Breast epithelium (tissue), 4 donors: ENCODE measurements at regions of chr1 and their contacts with region 1.

Region 1: GRCh38 chr1:43974443-43975248 is at the start of gene ATP6V0B:
- DNase-seq: peak; percentile 95 to 98
- H3K4me3 ChIP-seq: peak within 1 kb of the TSS; percentile 92 to 95 (median 95)
- H3K27ac ChIP-seq: peak within 1 kb of the TSS; percentile 96 to 97
- H3K4me1 ChIP-seq: peaks cover 0 to 26% of the 10 kb centered on the region in 2 donors
- H3K27me3 ChIP-seq: no peaks in the 10 kb centered on the region
- CTCF ChIP-seq: peak; percentile 8 to 58 (median 54)
- POLR2A ChIP-seq: peak; percentile 88
- total RNA-seq, gene ATP6V0B: 131 to 156 (median 155) TPM

Region 2: GRCh38 chr1:42335050-42335808 is 1639.4 kb before region 1 on chr1 and contains the start of gene FOXJ3:
- intact Hi-C with region 1: loop called (anchors 5 kb)
- DNase-seq: peak; percentile 83 to 89
- H3K4me3 ChIP-seq: peak within 1 kb of the TSS; percentile 96 to 98 (median 97)
- H3K27ac ChIP-seq: peak within 1 kb of the TSS; percentile 97 to 99
- H3K4me1 ChIP-seq: no peaks in the 10 kb centered on the region
- H3K27me3 ChIP-seq: no peaks in the 10 kb centered on the region
- CTCF ChIP-seq: peak in 1 of 3 donors; percentile 19
- POLR2A ChIP-seq: peak; percentile 57
- total RNA-seq, gene FOXJ3: 52.6 to 82.7 (median 57.7) TPM

Region 3: DNA sequence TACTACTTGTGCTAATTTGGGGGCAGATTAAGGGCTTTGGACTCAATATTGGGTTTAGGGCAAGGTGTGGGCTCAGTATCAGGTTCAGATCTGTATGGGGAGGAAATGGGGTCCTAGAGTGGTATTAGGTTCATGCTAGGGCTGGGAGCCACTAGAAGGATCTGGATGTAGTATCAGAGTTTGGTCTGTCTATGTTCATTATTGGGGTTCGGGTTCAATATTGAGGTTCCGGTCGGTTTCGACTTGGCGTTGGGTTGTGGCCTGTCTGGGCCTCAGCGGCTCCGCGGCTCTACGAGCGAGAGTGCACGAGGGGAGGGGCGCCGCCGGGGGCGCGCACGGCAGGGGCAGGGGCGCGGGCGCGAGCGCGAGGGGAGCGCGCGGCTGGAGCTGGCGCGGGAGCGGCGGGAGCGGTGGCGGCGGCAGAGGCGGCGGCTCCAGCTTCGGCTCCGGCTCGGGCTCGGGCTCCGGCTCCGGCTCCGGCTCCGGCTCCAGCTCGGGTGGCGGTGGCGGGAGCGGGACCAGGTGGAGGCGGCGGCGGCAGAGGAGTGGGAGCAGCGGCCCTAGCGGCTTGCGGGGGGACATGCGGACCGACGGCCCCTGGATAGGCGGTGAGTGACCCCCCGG is 444.1 kb before region 1 on chr1 and contains the start of gene PTPRF:
- intact Hi-C with region 1: loop called (anchors 10 kb)
- DNase-seq: peak in 1 of 2 donors; percentile 73
- H3K4me3 ChIP-seq: peak within 1 kb of the TSS; percentile 59 to 97 (median 88)
- H3K27ac ChIP-seq: peak within 1 kb of the TSS; percentile 85 to 98
- H3K4me1 ChIP-seq: peaks cover 0 to 13% of the 10 kb centered on the region in 2 donors
- H3K27me3 ChIP-seq: no peaks in the 10 kb centered on the region
- CTCF ChIP-seq: no peak
- POLR2A ChIP-seq: no peak
- total RNA-seq, gene PTPRF: 109 to 149 (median 116) TPM

Region 4: DNA sequence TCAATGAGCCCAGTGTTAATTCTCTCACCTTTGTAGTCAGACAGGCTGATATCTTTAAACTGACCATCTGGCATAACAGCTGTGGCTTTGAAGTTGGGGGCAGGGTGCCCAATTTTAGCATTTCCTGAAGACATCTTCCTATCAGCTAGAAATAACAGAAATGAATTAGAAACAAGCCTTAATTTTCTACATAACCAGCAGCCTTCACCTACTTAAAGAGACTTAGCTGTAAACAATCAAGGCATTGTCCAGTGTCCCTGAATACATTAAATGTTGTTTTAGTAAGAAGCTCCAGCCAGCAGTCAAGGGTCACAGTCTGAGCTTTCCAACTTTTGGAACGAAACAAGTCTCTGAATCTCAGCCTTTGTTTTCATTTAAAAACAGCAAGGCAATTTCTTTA is 1544.3 kb after region 1 on chr1:
- intact Hi-C with region 1: loop called (anchors 5 kb)
- DNase-seq: no peak
- H3K4me3 ChIP-seq: peak overlapping the region in 2 of 3 donors; percentile 11 to 29
- H3K27ac ChIP-seq: peak overlapping the region in 1 of 2 donors; percentile 11
- H3K4me1 ChIP-seq: peaks cover 5 to 14% of the 10 kb centered on the region in 2 donors
- H3K27me3 ChIP-seq: no peaks in the 10 kb centered on the region
- CTCF ChIP-seq: no peak
- POLR2A ChIP-seq: no peak